ENCODE measurements at regions of chr6 and their contacts with region 1.

Region 1: DNA sequence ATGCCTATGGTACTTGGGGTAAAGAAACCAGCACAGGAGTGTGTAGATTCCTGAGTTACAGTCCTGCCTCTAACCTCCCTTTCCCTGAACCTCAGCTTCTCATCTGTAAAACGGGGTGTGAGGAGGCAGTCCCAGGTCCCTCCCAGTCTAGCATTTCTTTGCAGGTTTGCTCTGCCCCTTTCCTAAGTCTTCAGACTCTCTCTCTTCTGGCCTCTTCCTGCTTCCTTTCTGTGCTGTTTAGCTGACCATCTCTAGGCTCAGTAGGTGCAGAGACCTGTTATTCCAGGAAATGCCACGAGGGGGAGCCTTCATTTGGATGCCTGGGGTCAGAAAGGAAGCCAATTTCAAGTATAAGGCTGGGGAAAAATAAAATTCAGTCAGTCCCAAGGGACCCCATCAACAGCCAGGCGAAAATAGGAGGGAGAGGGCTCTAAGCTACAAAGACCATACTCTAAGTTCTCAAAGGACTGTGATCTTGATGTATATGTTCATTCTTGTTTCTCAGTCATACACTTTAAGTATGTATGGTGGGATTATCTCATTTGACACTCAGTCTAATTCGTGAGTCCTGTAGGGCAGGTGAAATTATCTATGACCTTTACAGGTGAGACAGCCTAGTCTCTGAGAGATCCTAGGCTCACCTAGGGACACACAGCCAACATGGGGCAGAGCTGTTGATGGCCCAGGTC is 89.1 kb downstream of the NCR2 start:
- DNase-seq: peak; percentile 84
- H3K4me3 ChIP-seq: no peak overlapping the region
- H3K27ac ChIP-seq: no peak overlapping the region
- H3K4me1 ChIP-seq: peaks cover 0 to 17% of the 10 kb centered on the region in 2 experiments; a peak in 1 of 4 replicates
- H3K27me3 ChIP-seq: peaks cover 48% of the 10 kb centered on the region
- CTCF ChIP-seq: peak; percentile 85
- EP300 ChIP-seq: no peak
- RAD21 ChIP-seq: peak; percentile 76

Region 2: DNA sequence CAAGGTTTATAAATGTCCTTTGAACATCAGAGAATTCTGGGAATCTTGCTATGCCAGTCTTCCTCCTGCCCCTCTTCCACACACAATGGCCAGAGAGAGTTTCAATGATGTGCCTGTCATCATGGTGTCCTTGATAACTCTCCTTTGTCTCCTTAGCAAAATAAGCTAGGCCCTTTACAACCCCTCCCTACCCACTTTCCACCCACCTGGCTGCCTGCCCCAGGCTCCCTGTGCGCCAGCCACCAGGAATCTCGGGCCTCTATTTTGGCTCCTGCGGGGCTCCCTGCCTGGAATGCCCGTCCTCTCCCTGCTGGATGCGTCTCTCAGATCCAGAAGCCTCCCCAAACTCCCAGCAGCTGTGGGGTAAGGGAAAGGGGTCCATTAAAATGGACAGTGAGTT is 28.2 kb before region 1 on chr6:
- CTCF ChIA-PET with region 1: interaction called, 12 read pairs
- POLR2A ChIA-PET with region 1: no interaction called
- DNase-seq: no peak
- H3K4me3 ChIP-seq: no peak overlapping the region
- H3K27ac ChIP-seq: no peak overlapping the region
- H3K4me1 ChIP-seq: no peaks in the 10 kb centered on the region
- H3K27me3 ChIP-seq: peaks cover 40% of the 10 kb centered on the region
- CTCF ChIP-seq: no peak
- EP300 ChIP-seq: no peak
- RAD21 ChIP-seq: no peak

Region 3: GRCh38 chr6:41442800-41443501 is 18.4 kb after region 1 on chr6:
- CTCF ChIA-PET with region 1: interaction called, 27 read pairs
- POLR2A ChIA-PET with region 1: no interaction called
- DNase-seq: peak; percentile 69
- H3K4me3 ChIP-seq: peak overlapping the region in 1 of 2 experiments; percentile 35; a peak in 1 of 4 replicates
- H3K27ac ChIP-seq: no peak overlapping the region
- H3K4me1 ChIP-seq: no peaks in the 10 kb centered on the region
- H3K27me3 ChIP-seq: peaks cover 19% of the 10 kb centered on the region
- CTCF ChIP-seq: peak; percentile 49
- EP300 ChIP-seq: no peak
- RAD21 ChIP-seq: no peak

Region 4: DNA sequence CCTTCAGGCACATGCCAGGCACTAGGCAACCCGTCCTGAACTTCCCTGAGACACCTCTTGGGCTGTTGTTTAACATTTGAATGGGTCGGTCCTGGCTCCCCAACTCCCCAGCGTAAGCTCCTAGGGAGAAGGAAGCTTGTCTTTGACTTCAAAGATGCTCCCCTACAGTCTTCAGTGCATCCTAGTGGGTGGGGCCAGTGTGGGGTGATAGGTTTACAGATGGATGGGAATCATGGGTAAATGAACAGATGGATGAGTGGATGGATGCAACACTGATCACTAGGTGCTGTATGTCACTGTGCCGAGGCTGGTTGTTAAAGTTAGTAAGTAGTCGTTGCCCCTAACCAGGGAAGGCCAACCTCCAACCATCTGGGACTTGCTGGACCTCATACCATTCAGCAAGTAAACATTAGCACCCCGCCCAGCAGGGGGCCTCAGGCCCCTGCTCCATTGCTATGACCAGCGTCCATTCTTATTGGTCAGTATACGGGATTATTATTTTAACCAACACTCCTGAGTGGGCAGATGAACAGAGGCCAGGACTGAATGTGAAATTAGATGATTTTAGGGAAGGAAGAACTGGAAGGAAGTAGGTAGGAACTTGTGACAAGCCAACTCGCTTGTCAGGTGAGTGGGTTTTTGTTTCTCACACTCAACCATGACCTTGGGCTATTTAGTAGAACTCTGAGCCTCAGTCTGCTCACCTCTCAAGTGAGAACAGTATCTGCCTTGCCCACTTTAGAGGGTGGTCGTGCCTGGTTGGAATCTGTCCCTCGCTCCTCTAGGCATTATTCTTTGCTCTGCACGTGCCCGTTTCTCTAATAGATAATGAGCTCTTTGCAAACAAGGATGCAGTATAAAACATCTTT is 38.8 kb after region 1 on chr6:
- CTCF ChIA-PET with region 1: interaction called, 13 read pairs
- POLR2A ChIA-PET with region 1: no interaction called
- DNase-seq: peak; percentile 83
- H3K4me3 ChIP-seq: no peak overlapping the region; a peak in 1 of 4 replicates
- H3K27ac ChIP-seq: no peak overlapping the region
- H3K4me1 ChIP-seq: peaks cover 0 to 5% of the 10 kb centered on the region in 2 experiments; a peak in 1 of 4 replicates
- H3K27me3 ChIP-seq: no peaks in the 10 kb centered on the region
- CTCF ChIP-seq: peak; percentile 71
- EP300 ChIP-seq: no peak
- RAD21 ChIP-seq: peak; percentile 93

Region 5: DNA sequence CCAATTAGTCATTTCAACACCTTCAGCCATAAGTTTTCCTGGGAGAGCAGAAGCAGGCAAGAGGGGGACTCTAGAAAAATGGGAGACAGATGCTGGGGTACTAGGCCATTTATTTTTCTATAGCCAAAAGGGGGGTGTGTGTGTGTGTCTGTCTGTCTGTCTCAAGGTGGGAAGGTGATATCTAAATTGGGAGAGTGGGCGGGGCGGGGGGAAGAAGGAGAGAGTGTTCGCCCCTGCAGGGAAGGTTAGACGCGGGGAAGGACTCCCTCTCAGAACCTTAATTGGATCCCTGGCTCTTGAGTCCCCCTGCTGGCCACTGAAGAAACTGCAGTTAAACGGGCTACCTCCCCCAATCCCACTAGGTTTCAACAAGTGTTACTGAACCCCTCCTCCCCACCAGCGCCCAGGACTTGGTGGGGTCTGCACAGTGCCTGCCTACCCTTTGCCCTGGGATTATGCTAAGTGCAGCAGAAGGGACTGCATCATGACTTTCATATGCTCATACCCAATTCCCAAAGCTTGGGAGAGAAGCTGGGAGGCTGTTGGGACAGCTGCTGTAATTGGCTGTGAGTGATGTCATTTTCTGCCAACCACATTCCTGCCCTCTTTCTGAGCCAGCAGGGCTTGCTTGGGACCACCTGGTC is 167.5 kb after region 1 on chr6:
- CTCF ChIA-PET with region 1: interaction called, 51 read pairs
- POLR2A ChIA-PET with region 1: no interaction called
- DNase-seq: peak; percentile 92
- H3K4me3 ChIP-seq: peak overlapping the region in 1 of 2 experiments; percentile 28; a peak in 1 of 4 replicates
- H3K27ac ChIP-seq: no peak overlapping the region
- H3K4me1 ChIP-seq: peaks cover 0 to 27% of the 10 kb centered on the region in 2 experiments; a peak in 1 of 4 replicates
- H3K27me3 ChIP-seq: no peaks in the 10 kb centered on the region
- CTCF ChIP-seq: peak; percentile 89
- EP300 ChIP-seq: no peak
- RAD21 ChIP-seq: peak; percentile 92